Breast epithelium (tissue), 4 donors: ENCODE measurements at regions of chr18 and their contacts with region 1.

Region 1: GRCh38 chr18:29749704-29750103 is 1292.8 kb downstream of the DSC3 start:
- DNase-seq: no peak
- H3K4me3 ChIP-seq: no peak overlapping the region
- H3K27ac ChIP-seq: no peak overlapping the region
- H3K4me1 ChIP-seq: no peaks in the 10 kb centered on the region
- H3K27me3 ChIP-seq: no peaks in the 10 kb centered on the region
- CTCF ChIP-seq: no peak
- POLR2A ChIP-seq: no peak

Region 2: GRCh38 chr18:28342231-28342630 is 1407.5 kb before region 1 on chr18:
- intact Hi-C with region 1: loop called (anchors 5 kb)
- DNase-seq: no peak
- H3K4me3 ChIP-seq: no peak overlapping the region
- H3K27ac ChIP-seq: no peak overlapping the region
- H3K4me1 ChIP-seq: no peaks in the 10 kb centered on the region
- H3K27me3 ChIP-seq: no peaks in the 10 kb centered on the region
- CTCF ChIP-seq: no peak
- POLR2A ChIP-seq: no peak

Region 3: DNA sequence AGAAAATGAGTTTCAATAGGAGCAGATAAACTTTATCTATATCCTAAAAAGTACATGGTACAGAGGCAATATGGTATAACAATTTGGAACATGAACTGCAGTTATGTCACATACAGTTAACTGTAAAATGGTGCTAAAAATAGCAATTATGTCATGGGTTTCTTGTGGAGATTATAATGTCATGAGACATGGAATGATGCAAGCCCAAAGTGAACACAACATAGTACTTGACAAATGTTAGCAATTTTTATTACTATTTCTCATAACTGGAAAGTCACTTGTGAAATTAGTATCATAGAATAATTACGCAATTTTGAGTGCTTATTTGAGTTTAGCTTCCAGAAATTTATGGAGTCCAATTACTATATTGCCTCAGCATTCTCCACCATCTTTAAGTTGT is 29.4 kb after region 1 on chr18:
- intact Hi-C with region 1: no loop called
- DNase-seq: no peak
- H3K4me3 ChIP-seq: no peak overlapping the region
- H3K27ac ChIP-seq: no peak overlapping the region
- H3K4me1 ChIP-seq: no peaks in the 10 kb centered on the region
- H3K27me3 ChIP-seq: no peaks in the 10 kb centered on the region
- CTCF ChIP-seq: no peak
- POLR2A ChIP-seq: no peak